Mammary epithelial cell (primary cell): ENCODE measurements at regions of chr10 and their contacts with region 1.

Region 1: DNA sequence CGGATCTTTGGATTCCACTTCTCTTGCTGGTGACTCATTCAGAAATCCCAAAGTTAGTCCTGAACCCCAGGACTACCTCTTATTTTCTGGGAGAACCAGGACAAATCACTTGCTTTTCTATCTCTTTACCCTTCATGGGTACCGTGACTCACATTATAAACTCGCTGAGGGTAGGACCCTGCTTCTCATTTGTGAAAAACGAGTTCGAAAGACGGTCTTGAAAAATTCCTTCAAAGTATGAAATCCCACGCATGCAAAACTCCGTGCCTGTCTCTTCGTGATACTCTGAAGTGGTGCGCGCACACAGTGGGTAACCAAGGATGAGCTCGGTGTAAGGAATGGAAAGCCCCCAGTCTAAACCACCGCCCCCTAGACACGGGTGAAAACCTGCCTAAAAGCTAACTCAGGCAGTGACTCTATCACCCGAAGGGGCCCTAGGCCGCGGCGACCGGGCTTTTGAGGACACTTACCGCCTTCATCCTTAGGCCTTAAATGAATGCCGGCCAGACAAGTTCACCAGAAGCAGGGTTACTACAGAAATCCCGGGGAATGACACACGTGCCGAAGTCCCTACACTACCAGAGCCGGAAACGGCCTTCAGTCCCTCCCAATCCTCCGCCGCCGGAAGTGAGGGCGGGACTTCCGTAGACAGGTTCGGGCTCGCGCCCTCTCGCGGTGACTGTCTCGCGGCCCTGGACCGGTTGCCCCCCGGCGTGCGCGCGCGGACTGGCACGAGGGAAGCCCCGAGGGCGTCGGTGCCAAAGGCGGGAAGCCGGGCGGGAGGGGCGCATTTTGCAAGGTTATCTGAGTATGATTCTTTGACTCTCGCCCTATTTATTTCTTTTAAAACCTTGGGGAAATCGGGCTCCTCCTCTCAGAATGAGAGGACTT is at the start of gene NOC3L:
- DNase-seq: peak; percentile 93
- H3K4me3 ChIP-seq: peak within 1 kb of the TSS; percentile 51 to 88 (median 67)
- H3K27ac ChIP-seq: peak within 1 kb of the TSS; percentile 63
- H3K4me1 ChIP-seq: peaks cover 16% of the 10 kb centered on the region
- H3K27me3 ChIP-seq: no peaks in the 10 kb centered on the region
- CTCF ChIP-seq: peak; percentile 62 to 97
- total RNA-seq, gene NOC3L: 19.0 to 33.7 TPM

Region 2: GRCh38 chr10:94402015-94402842 is 39.6 kb after region 1 on chr10 and contains the start of gene TBC1D12:
- CTCF ChIA-PET with region 1: no interaction called
- dilution Hi-C with region 1: no loop called
- in situ Hi-C with region 1: no loop called
- intact Hi-C with region 1: loop called (anchors 1 kb)
- DNase-seq: peak; percentile 95
- H3K4me3 ChIP-seq: peak within 1 kb of the TSS; percentile 86 to 92 (median 90)
- H3K27ac ChIP-seq: peak within 1 kb of the TSS; percentile 74
- H3K4me1 ChIP-seq: peaks cover 10% of the 10 kb centered on the region
- H3K27me3 ChIP-seq: no peaks in the 10 kb centered on the region
- CTCF ChIP-seq: no peak
- total RNA-seq, gene TBC1D12: 7.4 to 15.7 TPM

Region 3: DNA sequence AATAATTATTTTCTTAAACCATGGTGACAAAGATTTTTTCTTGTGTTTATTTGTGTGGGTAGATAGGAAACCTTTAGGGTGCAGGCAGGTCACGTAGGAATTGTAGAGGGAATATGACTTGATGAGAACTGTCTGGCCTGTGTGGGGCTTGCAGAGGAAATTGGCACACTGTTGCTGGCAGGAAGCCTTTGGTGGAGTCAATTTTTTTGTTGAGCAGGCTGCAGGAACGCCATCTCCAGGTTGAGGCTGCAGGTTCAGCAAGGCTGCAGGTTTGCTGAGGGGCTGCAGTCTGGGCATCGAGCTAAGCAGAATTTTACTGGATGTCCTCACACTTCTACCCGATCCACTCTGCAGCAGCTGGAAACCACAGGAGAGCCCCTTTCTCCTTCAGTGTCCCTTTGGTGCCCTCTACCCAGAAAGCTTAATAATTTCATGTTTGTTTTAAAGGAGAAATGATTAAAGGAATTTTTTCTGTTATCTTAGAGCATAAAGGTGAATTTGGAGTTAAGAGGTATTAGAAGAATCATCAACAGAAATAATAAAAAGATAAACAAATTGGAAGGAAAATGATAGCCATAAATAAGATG is 76.8 kb after region 1 on chr10:
- CTCF ChIA-PET with region 1: interaction called, 8 read pairs
- dilution Hi-C with region 1: no loop called
- in situ Hi-C with region 1: no loop called
- intact Hi-C with region 1: loop called (anchors 1 kb)
- DNase-seq: peak; percentile 3
- H3K4me3 ChIP-seq: no peak overlapping the region
- H3K27ac ChIP-seq: no peak overlapping the region
- H3K4me1 ChIP-seq: no peaks in the 10 kb centered on the region
- H3K27me3 ChIP-seq: no peaks in the 10 kb centered on the region
- CTCF ChIP-seq: peak in 1 of 2 donors; percentile 7

Region 4: GRCh38 chr10:94545391-94546048 is 182.9 kb after region 1 on chr10 and contains the start of gene HELLS:
- CTCF ChIA-PET with region 1: no interaction called
- dilution Hi-C with region 1: no loop called
- in situ Hi-C with region 1: no loop called
- intact Hi-C with region 1: loop called (anchors 2 kb)
- DNase-seq: peak; percentile 85
- H3K4me3 ChIP-seq: peak within 1 kb of the TSS; percentile 75 to 88 (median 85)
- H3K27ac ChIP-seq: peak within 1 kb of the TSS; percentile 76
- H3K4me1 ChIP-seq: peaks cover 12% of the 10 kb centered on the region
- H3K27me3 ChIP-seq: no peaks in the 10 kb centered on the region
- CTCF ChIP-seq: no peak
- total RNA-seq, gene HELLS: 11.5 to 70.3 TPM

Region 5: GRCh38 chr10:95266674-95267095 is 904.1 kb after region 1 on chr10:
- CTCF ChIA-PET with region 1: no interaction called
- dilution Hi-C with region 1: no loop called
- in situ Hi-C with region 1: no loop called
- intact Hi-C with region 1: no loop called
- DNase-seq: peak; percentile 97
- H3K4me3 ChIP-seq: no peak overlapping the region
- H3K27ac ChIP-seq: peak overlapping the region; percentile 99
- H3K4me1 ChIP-seq: peaks cover 50% of the 10 kb centered on the region
- H3K27me3 ChIP-seq: no peaks in the 10 kb centered on the region
- CTCF ChIP-seq: no peak